Gastrocnemius medialis (tissue), 4 donors: ENCODE measurements at regions of chr17 and their contacts with region 1.

Region 1: GRCh38 chr17:33779225-33779591 is 475.9 kb upstream of the CCL2 start:
- DNase-seq: peak; percentile 9 to 23
- ATAC-seq: no peak
- H3K4me3 ChIP-seq: no peak overlapping the region
- H3K27ac ChIP-seq: no peak overlapping the region
- H3K4me1 ChIP-seq: no peaks in the 10 kb centered on the region
- H3K27me3 ChIP-seq: no peaks in the 10 kb centered on the region
- CTCF ChIP-seq: peak; percentile 56 to 94 (median 75)
- POLR2A ChIP-seq: no peak

Region 2: DNA sequence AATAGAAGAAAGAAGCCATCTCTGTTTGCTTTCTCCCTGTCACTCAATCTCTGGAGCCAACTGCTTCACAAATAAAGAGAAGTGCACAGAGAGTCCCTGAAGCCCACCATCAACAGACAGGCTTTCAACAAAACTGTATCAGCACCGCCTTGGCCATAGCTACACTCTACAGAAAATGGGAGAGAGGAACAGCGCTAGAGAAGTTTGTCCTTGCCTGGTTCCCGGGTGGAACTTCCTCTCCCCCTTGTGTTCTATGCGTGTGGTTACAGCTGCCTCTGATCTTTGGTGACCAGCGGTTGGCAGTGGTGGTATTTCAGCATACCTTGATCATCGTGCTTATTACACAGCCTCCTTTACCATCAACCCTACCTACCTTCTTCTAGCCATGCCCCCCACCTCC is 384.4 kb after region 1 on chr17:
- in situ Hi-C with region 1: loop called in 1 of 4 experiments (anchors 10 kb)
- intact Hi-C with region 1: loop called (anchors 5 kb)
- DNase-seq: no peak
- ATAC-seq: no peak
- H3K4me3 ChIP-seq: no peak overlapping the region
- H3K27ac ChIP-seq: no peak overlapping the region
- H3K4me1 ChIP-seq: peaks cover 0 to 11% of the 10 kb centered on the region in 2 donors
- H3K27me3 ChIP-seq: peaks cover 3 to 10% (median 6%) of the 10 kb centered on the region in 3 donors
- CTCF ChIP-seq: peak in 2 of 5 experiments; percentile 20 to 32
- POLR2A ChIP-seq: no peak